ENCODE measurements at regions of chr7 and their contacts with region 1.

Region 1: DNA sequence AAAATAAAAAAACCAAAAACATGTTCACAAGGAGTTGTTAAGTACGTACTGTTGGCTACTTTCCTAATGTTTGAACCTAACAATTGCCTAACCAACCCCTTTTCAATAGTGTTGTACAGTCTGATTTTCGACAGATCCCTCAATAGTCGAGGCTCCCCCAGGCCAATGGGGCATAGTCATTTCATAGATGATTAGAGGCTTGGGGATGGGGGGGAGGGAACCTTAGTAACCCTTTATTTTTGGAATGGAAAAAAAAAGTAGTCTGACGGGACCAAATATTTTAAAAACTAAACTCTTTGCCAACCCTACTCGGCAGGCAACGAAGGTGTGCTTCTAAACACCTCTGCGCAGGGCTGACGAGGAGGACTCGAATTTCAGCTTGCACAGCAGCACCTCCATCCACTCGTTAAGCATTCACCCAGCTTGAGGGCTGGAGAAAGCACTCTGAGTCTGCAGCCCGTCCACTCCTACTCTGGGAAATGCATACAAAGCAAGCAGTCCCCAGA is 991 bp downstream of the PUS7 start:
- DNase-seq: no peak
- ATAC-seq: no peak
- H3K4me3 Mint-ChIP-seq: peak overlapping the region; percentile 88 to 97 (median 95)
- H3K27ac Mint-ChIP-seq: peak overlapping the region; percentile 69 to 94 (median 88)
- H3K4me1 Mint-ChIP-seq: peaks cover 5 to 24% (median 12%) of the 10 kb centered on the region in 4 donors
- H3K27me3 Mint-ChIP-seq: no peaks in the 10 kb centered on the region

Region 2: DNA sequence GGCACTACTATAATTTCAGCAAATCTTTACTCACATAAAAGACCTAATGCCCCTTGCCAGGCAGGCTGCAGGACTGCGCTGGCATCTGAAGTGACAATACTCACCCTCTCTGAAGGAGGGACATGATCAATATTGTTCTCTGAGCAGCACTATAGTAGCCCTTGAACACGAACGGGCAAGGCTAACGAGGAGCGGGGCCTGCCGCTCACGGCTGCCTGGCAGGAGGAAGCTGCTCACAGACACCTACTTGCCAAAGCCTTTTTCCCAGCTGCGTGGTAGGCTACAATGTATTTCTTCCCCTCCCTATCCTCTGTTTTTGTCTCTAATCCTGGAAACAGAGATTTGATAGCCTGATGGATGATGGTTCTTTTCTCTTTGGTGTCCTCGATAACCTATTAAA is 18.9 kb before region 1 on chr7:
- POLR2A ChIA-PET with region 1: no interaction called
- DNase-seq: no peak
- ATAC-seq: no peak
- H3K4me3 Mint-ChIP-seq: no peak overlapping the region
- H3K27ac Mint-ChIP-seq: peak overlapping the region in 1 of 10 donors; percentile 25
- H3K4me1 Mint-ChIP-seq: no peaks in the 10 kb centered on the region
- H3K27me3 Mint-ChIP-seq: no peaks in the 10 kb centered on the region

Region 3: GRCh38 chr7:105531792-105532671 is 11.0 kb after region 1 on chr7 and contains the start of gene RINT1:
- POLR2A ChIA-PET with region 1: interaction called, 11 read pairs
- DNase-seq: peak; percentile 71 to 91 (median 86)
- ATAC-seq: peak; percentile 89
- H3K4me3 Mint-ChIP-seq: peak within 1 kb of the TSS; percentile 84 to 96 (median 92)
- H3K27ac Mint-ChIP-seq: peak within 1 kb of the TSS; percentile 86 to 98 (median 97)
- H3K4me1 Mint-ChIP-seq: peaks cover 13 to 42% (median 39%) of the 10 kb centered on the region in 4 donors
- H3K27me3 Mint-ChIP-seq: no peaks in the 10 kb centered on the region
- polyA plus RNA-seq, gene RINT1: 15.0 to 17.5 (median 15.4) TPM

Region 4: DNA sequence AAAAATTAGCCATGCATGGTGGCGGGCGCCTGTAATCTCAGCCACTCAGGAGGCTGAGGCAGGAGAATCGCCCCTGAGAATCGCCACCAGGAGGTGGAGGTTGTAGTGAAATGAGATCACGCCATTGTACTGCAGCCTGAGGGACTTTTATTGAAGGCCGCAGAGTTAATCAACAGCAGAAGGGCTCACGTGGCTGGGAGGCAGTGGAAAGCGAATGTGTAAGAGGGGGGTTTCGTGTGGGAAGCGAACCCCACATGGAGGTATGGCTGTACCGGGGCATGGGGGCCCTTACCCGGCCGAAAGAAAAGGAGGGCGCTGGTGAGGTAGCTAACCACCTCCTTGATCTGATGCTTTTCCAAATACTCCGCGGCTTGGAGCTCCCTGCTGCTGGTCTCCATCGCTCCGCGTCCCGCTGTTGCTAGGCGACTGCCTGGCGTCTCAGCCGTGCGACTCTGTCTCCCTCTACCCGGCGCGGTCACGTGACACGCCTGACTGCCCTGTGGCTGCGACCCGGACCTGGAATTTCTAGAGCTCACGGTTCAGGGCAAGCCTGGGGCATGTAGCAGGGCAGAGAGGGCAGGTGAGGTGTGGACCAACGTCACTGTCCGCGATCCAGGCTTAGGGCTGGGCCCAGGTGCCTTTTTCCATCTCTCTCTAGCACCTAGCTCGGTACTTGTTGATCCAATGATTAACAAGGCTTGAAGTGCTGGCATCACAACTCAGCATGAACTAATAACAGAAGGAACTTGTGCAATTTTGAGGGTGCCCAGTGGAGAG is 60.2 kb after region 1 on chr7 and contains the start of gene EFCAB10:
- POLR2A ChIA-PET with region 1: no interaction called
- DNase-seq: peak; percentile 6 to 66 (median 22)
- ATAC-seq: peak; percentile 59 to 65
- H3K4me3 Mint-ChIP-seq: peak within 1 kb of the TSS; percentile 63 to 84 (median 78)
- H3K27ac Mint-ChIP-seq: peak within 1 kb of the TSS in 2 of 10 donors; percentile 59 to 79
- H3K4me1 Mint-ChIP-seq: peaks cover 3 to 9% (median 7%) of the 10 kb centered on the region in 4 donors
- H3K27me3 Mint-ChIP-seq: peaks cover 2 to 26% (median 10%) of the 10 kb centered on the region in 5 donors
- polyA plus RNA-seq, gene EFCAB10: not detected